Ovary (tissue), 10 donors: ENCODE measurements at regions of chr19 and their contacts with region 1.

Region 1: GRCh38 chr19:40312533-40312932 is 27.4 kb upstream of the AKT2 start:
- DNase-seq: peak in 1 of 5 donors; percentile 20
- H3K4me3 ChIP-seq: no peak overlapping the region
- H3K27ac ChIP-seq: no peak overlapping the region
- H3K4me1 ChIP-seq: no peaks in the 10 kb centered on the region
- H3K27me3 ChIP-seq: no peaks in the 10 kb centered on the region
- CTCF ChIP-seq: no peak
- EP300 ChIP-seq: no peak
- POLR2A ChIP-seq: no peak

Region 2: GRCh38 chr19:40452016-40452415 is 139.5 kb after region 1 on chr19:
- intact Hi-C with region 1: loop called in 1 of 4 experiments (anchors 10 kb)
- DNase-seq: no peak
- H3K4me3 ChIP-seq: no peak overlapping the region
- H3K27ac ChIP-seq: no peak overlapping the region
- H3K4me1 ChIP-seq: no peaks in the 10 kb centered on the region
- H3K27me3 ChIP-seq: no peaks in the 10 kb centered on the region
- CTCF ChIP-seq: no peak
- EP300 ChIP-seq: no peak
- POLR2A ChIP-seq: no peak